Activated B cell treated with CpG ODN at 0.5 μM for 24 hours (primary cell): ENCODE measurements at regions of chr1 and their contacts with region 1.

Region 1: DNA sequence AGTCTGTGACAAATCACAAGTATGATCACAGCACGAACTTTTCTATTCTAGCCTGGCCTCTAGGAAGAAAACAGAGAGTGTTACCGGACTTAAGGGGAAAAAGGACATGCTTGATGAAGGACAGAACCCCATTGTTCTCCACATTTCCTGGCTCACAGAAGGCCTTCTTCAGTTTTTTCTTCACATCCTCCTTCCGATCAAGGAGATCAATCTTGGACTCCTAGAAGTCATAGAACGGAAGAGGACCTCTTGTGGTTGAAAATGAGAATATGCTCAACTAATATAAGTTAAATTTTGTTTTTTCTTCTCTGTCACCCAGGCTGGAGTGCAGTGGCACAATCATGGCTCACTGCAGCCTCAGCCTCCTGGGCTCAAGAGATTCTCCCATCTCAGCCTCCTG is 30.3 kb downstream of the YARS1 start:
- DNase-seq: no peak
- ATAC-seq: no peak
- H3K4me3 Mint-ChIP-seq: no peak overlapping the region
- H3K27ac Mint-ChIP-seq: no peak overlapping the region
- H3K4me1 Mint-ChIP-seq: peaks cover 2% of the 10 kb centered on the region
- H3K27me3 Mint-ChIP-seq: no peaks in the 10 kb centered on the region
- CTCF ChIP-seq: no peak

Region 2: GRCh38 chr1:32801096-32801715 is 14.3 kb after region 1 on chr1:
- CTCF ChIA-PET with region 1: no interaction called
- POLR2A ChIA-PET with region 1: interaction called, 17 read pairs
- intact Hi-C with region 1: no loop called
- DNase-seq: no peak
- ATAC-seq: peak; percentile 25
- H3K4me3 Mint-ChIP-seq: no peak overlapping the region
- H3K27ac Mint-ChIP-seq: peak overlapping the region; percentile 37
- H3K4me1 Mint-ChIP-seq: peaks cover 42% of the 10 kb centered on the region
- H3K27me3 Mint-ChIP-seq: no peaks in the 10 kb centered on the region
- CTCF ChIP-seq: no peak